Body of pancreas (tissue), 4 donors: ENCODE measurements at regions of chr6 and their contacts with region 1.

Region 1: DNA sequence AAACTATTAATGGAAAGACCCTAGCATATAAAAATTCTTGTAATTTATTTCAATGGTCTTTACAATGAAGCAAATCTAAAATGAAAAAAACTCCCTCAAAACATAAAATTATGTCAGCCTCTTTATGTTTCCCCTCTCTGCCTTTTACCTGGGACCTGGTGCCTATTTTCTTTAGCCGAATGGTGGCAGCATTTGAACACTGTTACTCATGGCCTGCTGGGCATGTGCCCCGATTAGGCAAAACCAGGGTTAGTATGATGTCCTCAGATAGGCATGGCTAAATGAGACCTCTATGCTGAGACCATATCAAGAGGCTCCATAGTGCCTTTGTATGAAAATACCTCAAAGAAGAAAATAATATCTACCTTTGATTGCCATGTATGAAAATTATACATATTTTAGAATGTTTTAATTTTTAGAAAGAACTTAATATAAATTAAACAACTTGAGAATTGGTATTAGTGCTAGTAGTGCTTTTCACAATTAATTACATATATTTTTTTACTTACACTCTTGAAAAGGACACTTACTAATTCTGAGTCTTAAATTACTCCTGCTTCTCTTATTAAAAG is 22.5 kb upstream of the C6orf58 start:
- DNase-seq: peak; percentile 31 to 54 (median 44)
- ATAC-seq: peak; percentile 63
- H3K4me3 ChIP-seq: no peak overlapping the region
- H3K27ac ChIP-seq: no peak overlapping the region
- H3K4me1 ChIP-seq: no peaks in the 10 kb centered on the region
- H3K27me3 ChIP-seq: no peaks in the 10 kb centered on the region
- CTCF ChIP-seq: peak in 6 of 7 experiments; percentile 26 to 56 (median 51)
- POLR2A ChIP-seq: no peak

Region 2: GRCh38 chr6:127471379-127472255 is 82.9 kb before region 1 on chr6:
- intact Hi-C with region 1: no loop called
- DNase-seq: no peak
- ATAC-seq: no peak
- H3K4me3 ChIP-seq: no peak overlapping the region
- H3K27ac ChIP-seq: no peak overlapping the region
- H3K4me1 ChIP-seq: no peaks in the 10 kb centered on the region
- H3K27me3 ChIP-seq: no peaks in the 10 kb centered on the region
- CTCF ChIP-seq: no peak
- POLR2A ChIP-seq: no peak

Region 3: DNA sequence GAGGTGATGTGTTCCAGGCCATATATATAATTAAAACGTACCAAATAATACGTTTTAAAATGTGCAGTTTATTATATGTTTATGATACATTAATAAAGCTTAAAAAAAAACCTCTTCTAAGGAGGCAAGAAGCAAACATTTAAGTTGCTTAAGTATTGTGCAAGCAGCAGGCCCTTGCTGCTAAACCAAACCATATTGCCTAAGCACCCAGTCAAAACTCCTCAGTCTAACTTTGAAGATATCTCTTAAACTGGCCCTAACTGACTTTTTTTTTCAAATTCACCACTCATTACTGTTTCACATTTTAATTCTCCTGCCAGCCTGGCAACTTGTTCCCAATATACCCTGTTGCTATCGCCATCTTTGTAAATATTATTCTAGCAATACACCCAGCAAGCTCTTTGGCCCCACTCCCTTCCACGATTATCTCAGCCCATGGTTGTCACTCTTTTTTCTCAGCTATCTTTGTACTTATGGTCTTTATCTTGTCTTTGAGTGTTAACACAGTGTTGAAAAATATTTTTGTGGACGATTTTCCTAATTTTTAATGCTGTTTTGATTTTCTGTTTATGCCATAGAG is 83.4 kb after region 1 on chr6:
- intact Hi-C with region 1: loop called (anchors 10 kb)
- DNase-seq: no peak
- ATAC-seq: no peak
- H3K4me3 ChIP-seq: no peak overlapping the region
- H3K27ac ChIP-seq: no peak overlapping the region
- H3K4me1 ChIP-seq: no peaks in the 10 kb centered on the region
- H3K27me3 ChIP-seq: no peaks in the 10 kb centered on the region
- CTCF ChIP-seq: no peak
- POLR2A ChIP-seq: no peak

Region 4: DNA sequence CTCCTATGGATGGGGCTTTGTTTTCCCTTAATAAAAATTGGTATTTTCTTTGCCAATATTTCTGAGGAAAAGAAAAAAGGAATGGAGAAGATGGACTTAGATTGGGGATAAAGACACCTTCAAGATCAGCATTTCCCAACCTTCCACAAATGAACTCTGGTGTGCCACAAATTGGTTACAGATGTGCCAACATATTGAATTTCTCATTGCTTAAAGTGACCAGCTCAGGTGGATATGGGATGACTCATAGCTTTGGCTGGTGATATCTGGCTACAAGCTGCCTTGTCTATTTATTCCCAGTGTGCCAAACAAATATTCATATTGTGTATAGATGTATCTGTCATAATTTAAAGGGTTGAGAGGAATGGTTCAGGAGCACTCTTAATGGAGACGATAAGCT is 313.8 kb after region 1 on chr6:
- intact Hi-C with region 1: no loop called
- DNase-seq: no peak
- ATAC-seq: no peak
- H3K4me3 ChIP-seq: no peak overlapping the region
- H3K27ac ChIP-seq: no peak overlapping the region
- H3K4me1 ChIP-seq: no peaks in the 10 kb centered on the region
- H3K27me3 ChIP-seq: no peaks in the 10 kb centered on the region
- CTCF ChIP-seq: no peak
- POLR2A ChIP-seq: no peak